ENCODE measurements at regions of chr4 and their contacts with region 1.

Region 1: DNA sequence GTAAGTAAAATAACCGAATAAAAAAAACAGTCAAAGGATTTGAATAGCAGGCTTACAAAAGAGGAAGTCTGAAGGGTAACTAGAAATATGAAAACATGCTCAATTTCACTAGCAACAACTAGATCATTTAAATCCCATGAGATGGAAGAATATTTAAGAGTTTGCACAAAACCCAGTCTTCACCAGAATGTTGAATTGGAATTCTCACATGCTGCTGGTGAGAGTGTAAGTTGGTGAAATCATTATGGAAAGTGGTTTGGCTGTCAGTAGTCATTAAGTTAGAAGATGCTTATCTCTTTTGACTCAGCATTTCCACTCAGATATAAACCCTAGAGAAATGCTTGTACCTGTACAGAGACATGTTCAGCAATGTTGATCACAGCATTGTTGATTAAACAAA is 110.1 kb downstream of the PGRMC2 start:
- DNase-seq: no peak
- H3K4me3 ChIP-seq: no peak overlapping the region
- H3K27ac ChIP-seq: no peak overlapping the region
- H3K4me1 ChIP-seq: no peaks in the 10 kb centered on the region
- H3K27me3 ChIP-seq: no peaks in the 10 kb centered on the region
- CTCF ChIP-seq: no peak
- EP300 ChIP-seq: no peak
- POLR2A ChIP-seq: no peak

Region 2: GRCh38 chr4:128060699-128061565 is 116.6 kb before region 1 on chr4 and contains the start of gene LARP1B:
- in situ Hi-C with region 1: no loop called
- intact Hi-C with region 1: no loop called
- DNase-seq: peak; percentile 97
- H3K4me3 ChIP-seq: peak within 1 kb of the TSS; percentile 78 to 97 (median 84)
- H3K27ac ChIP-seq: peak within 1 kb of the TSS; percentile 97 to 100 (median 99)
- H3K4me1 ChIP-seq: peaks cover 4 to 21% (median 10%) of the 10 kb centered on the region in 4 donors
- H3K27me3 ChIP-seq: no peaks in the 10 kb centered on the region
- CTCF ChIP-seq: no peak
- EP300 ChIP-seq: no peak
- POLR2A ChIP-seq: peak; percentile 83
- total RNA-seq, gene LARP1B: 35.1 to 49.2 (median 40.1) TPM

Region 3: DNA sequence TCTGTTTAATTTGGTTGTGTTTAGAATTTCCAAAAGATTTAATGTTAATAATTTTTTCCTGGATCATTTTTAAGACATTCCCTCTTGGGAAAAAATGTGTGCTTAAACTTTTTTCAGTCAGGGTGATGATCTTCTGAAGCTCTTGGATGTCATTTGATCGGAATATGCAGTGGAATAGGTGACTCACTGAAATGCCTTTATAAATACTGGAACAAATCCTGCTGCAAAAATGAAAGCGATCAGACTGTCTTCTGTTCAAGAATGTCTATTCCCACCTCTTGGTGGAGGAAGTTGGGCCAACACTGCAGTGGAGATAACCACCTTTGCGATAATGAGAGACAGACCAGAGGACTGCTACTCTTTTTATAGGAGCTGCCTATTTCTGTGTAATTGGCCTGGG is 69.7 kb before region 1 on chr4:
- in situ Hi-C with region 1: no loop called
- intact Hi-C with region 1: loop called (anchors 2 kb)
- DNase-seq: no peak
- H3K4me3 ChIP-seq: no peak overlapping the region
- H3K27ac ChIP-seq: no peak overlapping the region
- H3K4me1 ChIP-seq: no peaks in the 10 kb centered on the region
- H3K27me3 ChIP-seq: no peaks in the 10 kb centered on the region
- CTCF ChIP-seq: no peak
- EP300 ChIP-seq: no peak
- POLR2A ChIP-seq: no peak

Measured in transverse colon (tissue), 4 donors.